Calu3 (cell line): ENCODE measurements at regions of chr13 and their contacts with region 1.

Region 1: GRCh38 chr13:25574437-25575411 is 202.9 kb downstream of the ATP8A2 start:
- DNase-seq: peak; percentile 71
- H3K4me3 Mint-ChIP-seq: no peak overlapping the region
- H3K27ac Mint-ChIP-seq: no peak overlapping the region
- H3K4me1 Mint-ChIP-seq: no peaks in the 10 kb centered on the region
- H3K27me3 Mint-ChIP-seq: peaks cover 80% of the 10 kb centered on the region
- CTCF ChIP-seq: peak; percentile 40

Region 2: DNA sequence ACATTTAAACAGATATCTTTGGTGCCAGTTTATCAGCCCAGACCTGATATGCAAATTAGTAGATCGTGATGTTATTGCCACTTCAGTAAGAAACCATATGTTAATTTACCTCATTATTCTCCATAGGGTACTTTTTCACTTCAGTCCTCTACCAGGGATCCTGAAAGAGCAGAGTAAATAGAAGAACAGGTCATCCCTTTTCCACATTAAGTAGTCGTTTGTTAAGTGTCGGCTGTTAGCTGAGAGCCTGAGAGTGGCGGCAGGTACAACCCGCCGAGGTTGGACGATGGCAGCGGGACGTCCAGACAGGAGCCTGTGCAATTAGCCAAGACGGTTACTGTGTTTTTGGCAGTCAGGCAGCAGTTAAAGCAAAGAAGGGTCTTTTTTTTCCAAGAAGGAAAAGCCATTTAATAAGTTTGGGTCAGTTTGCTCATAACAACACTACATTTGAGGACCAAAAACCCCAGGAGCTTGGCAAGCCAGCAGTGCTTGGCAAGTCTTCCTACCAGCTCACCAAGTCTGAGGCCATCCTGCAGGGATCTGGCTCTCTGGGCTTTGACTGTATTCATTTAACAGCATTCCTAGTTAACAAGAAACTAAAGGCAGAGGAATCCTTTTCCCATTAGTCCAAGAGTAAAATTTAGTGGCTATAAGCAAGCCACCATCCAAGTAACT is 245.3 kb after region 1 on chr13:
- CTCF ChIA-PET with region 1: no interaction called
- intact Hi-C with region 1: loop called (anchors 10 kb)
- DNase-seq: no peak
- H3K4me3 Mint-ChIP-seq: no peak overlapping the region
- H3K27ac Mint-ChIP-seq: no peak overlapping the region
- H3K4me1 Mint-ChIP-seq: no peaks in the 10 kb centered on the region
- H3K27me3 Mint-ChIP-seq: no peaks in the 10 kb centered on the region
- CTCF ChIP-seq: no peak

Region 3: DNA sequence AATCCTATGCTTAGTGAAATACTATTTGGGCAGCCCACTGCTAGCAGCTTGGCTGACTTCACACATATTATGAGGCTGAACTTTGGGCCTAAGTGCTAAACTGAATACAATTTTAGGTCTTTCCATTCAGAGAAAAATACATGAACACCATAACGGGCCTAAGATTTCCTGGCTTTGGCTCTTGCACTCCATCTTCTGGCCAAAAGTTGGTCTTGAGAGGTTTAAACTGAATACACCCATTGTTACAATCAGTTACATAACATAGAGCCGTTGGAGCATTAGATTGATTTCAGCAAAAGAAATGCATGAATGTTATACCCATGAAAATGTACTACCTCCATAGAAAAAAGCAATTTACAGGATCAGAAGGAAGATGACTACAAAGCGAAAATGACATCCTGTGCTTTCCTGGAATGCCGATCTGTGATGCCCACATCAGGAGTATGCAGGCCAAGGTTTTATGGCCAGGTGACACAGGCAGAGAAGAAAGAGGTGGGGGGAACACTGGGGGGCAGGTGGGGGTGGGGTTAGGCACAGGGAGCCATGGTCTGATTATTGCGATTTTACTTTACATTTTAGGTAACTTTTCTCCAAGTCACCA is 488.2 kb after region 1 on chr13:
- CTCF ChIA-PET with region 1: no interaction called
- intact Hi-C with region 1: loop called (anchors 2 kb)
- DNase-seq: peak; percentile 37
- H3K4me3 Mint-ChIP-seq: no peak overlapping the region
- H3K27ac Mint-ChIP-seq: no peak overlapping the region
- H3K4me1 Mint-ChIP-seq: no peaks in the 10 kb centered on the region
- H3K27me3 Mint-ChIP-seq: no peaks in the 10 kb centered on the region
- CTCF ChIP-seq: peak; percentile 23

Region 4: GRCh38 chr13:26112843-26113242 is 538.1 kb after region 1 on chr13:
- CTCF ChIA-PET with region 1: no interaction called
- intact Hi-C with region 1: loop called (anchors 2 kb)
- DNase-seq: no peak
- H3K4me3 Mint-ChIP-seq: no peak overlapping the region
- H3K27ac Mint-ChIP-seq: no peak overlapping the region
- H3K4me1 Mint-ChIP-seq: no peaks in the 10 kb centered on the region
- H3K27me3 Mint-ChIP-seq: peaks cover 36% of the 10 kb centered on the region
- CTCF ChIP-seq: peak; percentile 17